CD8-positive, alpha-beta T cell (primary cell): ENCODE measurements at regions of chr18 and their contacts with region 1.

Region 1: DNA sequence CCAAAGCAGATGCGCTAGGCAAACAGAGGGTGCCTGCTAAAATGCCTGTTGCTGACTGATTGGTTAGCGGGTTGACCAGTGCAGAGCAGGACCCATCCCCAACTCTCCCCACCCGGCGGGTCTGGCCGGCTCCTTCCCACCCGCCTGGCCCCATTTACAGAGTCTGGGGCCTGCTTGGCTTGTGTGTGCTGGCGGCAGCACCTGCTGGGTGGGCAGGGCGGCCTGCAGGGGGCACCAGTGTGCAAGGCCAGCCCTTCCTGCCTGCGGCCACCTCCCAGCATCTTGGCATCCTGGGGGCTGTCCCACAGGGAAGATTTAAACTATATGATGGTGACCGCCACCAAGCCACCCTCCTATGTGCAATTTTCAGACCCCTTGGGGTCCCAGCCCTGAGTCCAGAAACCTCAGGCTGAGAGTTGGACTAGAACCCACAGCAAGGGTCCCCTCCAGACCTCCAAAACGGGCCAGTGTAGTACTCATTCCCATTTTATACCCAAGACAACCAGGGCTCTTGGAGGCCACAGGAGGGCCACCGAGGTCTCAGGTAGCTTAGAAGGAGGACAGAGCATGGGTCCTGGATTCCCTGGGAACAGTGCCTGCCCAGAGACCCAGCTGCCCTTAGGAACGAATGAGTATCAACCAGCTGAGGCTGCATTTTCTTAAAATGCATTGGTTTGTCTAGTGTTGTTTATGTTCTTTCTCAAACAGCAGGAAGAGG is 173.6 kb downstream of the SMAD7 start:
- DNase-seq: peak; percentile 40 to 85 (median 65)
- ATAC-seq: peak; percentile 89
- H3K4me3 ChIP-seq: no peak overlapping the region
- H3K4me3 Mint-ChIP-seq: no peak overlapping the region
- H3K27ac ChIP-seq: no peak overlapping the region
- H3K27ac Mint-ChIP-seq: no peak overlapping the region
- H3K4me1 ChIP-seq: peaks cover 6% of the 10 kb centered on the region
- H3K4me1 Mint-ChIP-seq: peaks cover 2% of the 10 kb centered on the region
- H3K27me3 ChIP-seq: no peaks in the 10 kb centered on the region
- H3K27me3 Mint-ChIP-seq: peaks cover 7% of the 10 kb centered on the region
- CTCF ChIP-seq: peak; percentile 84

Region 2: GRCh38 chr18:48796491-48797205 is 19.5 kb after region 1 on chr18:
- CTCF ChIA-PET with region 1: interaction called, 15 read pairs
- POLR2A ChIA-PET with region 1: no interaction called
- intact Hi-C with region 1: no loop called
- DNase-seq: no peak
- ATAC-seq: no peak
- H3K4me3 ChIP-seq: no peak overlapping the region
- H3K4me3 Mint-ChIP-seq: no peak overlapping the region
- H3K27ac ChIP-seq: no peak overlapping the region
- H3K27ac Mint-ChIP-seq: no peak overlapping the region
- H3K4me1 ChIP-seq: no peaks in the 10 kb centered on the region
- H3K4me1 Mint-ChIP-seq: peaks cover 5% of the 10 kb centered on the region
- H3K27me3 ChIP-seq: no peaks in the 10 kb centered on the region
- H3K27me3 Mint-ChIP-seq: no peaks in the 10 kb centered on the region
- CTCF ChIP-seq: no peak

Region 3: DNA sequence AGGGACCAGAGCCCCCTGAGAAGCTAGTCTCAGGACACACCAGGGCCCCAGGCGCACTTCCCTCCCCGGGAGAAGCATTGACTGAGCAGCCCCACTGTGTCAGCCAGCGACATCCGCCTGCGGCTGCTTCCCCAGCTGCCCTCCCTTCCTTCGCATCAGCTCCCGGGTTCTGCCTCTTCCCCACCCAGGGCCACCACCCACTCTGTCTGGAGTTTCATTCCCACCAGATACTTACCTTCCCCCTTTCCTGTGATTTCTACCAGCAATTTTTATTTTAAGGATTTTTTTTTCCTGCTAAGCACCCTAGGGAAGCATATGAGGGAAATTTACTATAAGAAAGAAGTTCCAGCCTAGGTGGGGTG is 74.4 kb after region 1 on chr18:
- CTCF ChIA-PET with region 1: interaction called, 4 read pairs
- POLR2A ChIA-PET with region 1: no interaction called
- intact Hi-C with region 1: loop called in 1 of 2 experiments (anchors 5 kb)
- DNase-seq: peak in 3 of 9 experiments; percentile 18 to 41 (median 39)
- ATAC-seq: peak; percentile 57
- H3K4me3 ChIP-seq: no peak overlapping the region
- H3K4me3 Mint-ChIP-seq: no peak overlapping the region
- H3K27ac ChIP-seq: no peak overlapping the region
- H3K27ac Mint-ChIP-seq: no peak overlapping the region
- H3K4me1 ChIP-seq: peaks cover 12% of the 10 kb centered on the region
- H3K4me1 Mint-ChIP-seq: peaks cover 34% of the 10 kb centered on the region
- H3K27me3 ChIP-seq: no peaks in the 10 kb centered on the region
- H3K27me3 Mint-ChIP-seq: no peaks in the 10 kb centered on the region
- CTCF ChIP-seq: no peak

Region 4: DNA sequence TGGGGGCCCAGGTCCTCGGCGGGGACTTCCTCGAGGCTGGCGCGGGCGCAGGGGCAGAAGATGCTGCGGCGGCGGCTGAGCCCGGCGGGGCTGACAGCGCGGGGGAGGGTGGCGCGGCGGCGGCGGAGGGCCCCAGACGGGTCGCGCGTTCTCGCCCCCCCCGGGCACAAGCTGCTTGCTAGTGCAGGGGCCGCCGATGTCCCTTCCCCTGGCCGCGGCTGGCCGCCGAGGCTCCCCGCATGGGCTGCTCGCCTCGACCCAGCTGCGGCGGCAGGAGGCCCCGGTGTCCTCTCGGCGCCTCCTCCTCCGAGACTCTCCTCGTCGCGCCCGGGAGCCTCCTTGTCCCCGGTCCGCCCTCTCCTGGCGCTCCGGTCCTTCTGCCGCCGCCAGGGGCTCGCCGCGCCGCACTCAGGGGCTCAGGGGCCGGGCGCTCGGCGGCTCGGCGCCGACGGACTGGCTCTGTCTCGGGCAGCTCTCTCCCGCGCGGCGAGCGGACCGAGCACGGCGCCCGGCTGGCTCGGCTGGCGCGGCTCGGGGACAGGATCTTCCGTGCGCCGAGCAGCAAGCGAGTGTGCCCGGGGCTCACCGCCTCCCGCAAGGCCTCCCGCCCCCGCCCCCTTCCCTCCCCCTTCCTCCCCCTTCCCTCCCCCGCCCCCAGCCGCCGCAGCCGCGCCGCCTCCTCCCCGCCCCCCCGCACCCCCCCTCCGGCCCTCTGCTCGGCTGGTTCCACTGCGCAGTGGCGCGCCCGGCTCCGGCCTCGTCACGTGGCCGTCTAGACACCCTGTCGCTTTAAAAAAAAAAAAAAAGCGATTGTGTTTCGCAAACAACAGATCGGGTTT is 174.5 kb after region 1 on chr18:
- CTCF ChIA-PET with region 1: interaction called, 14 read pairs
- POLR2A ChIA-PET with region 1: no interaction called
- intact Hi-C with region 1: loop called in 1 of 2 experiments (anchors 1 kb)
- DNase-seq: peak; percentile 61 to 93 (median 80)
- ATAC-seq: peak; percentile 35
- H3K4me3 ChIP-seq: peak overlapping the region; percentile 77 to 85
- H3K4me3 Mint-ChIP-seq: peak overlapping the region; percentile 94
- H3K27ac ChIP-seq: peak overlapping the region; percentile 82 to 97
- H3K27ac Mint-ChIP-seq: peak overlapping the region; percentile 97
- H3K4me1 ChIP-seq: peaks cover 24% of the 10 kb centered on the region
- H3K4me1 Mint-ChIP-seq: peaks cover 51% of the 10 kb centered on the region
- H3K27me3 ChIP-seq: no peaks in the 10 kb centered on the region
- H3K27me3 Mint-ChIP-seq: peaks cover 3% of the 10 kb centered on the region
- CTCF ChIP-seq: no peak

Region 5: DNA sequence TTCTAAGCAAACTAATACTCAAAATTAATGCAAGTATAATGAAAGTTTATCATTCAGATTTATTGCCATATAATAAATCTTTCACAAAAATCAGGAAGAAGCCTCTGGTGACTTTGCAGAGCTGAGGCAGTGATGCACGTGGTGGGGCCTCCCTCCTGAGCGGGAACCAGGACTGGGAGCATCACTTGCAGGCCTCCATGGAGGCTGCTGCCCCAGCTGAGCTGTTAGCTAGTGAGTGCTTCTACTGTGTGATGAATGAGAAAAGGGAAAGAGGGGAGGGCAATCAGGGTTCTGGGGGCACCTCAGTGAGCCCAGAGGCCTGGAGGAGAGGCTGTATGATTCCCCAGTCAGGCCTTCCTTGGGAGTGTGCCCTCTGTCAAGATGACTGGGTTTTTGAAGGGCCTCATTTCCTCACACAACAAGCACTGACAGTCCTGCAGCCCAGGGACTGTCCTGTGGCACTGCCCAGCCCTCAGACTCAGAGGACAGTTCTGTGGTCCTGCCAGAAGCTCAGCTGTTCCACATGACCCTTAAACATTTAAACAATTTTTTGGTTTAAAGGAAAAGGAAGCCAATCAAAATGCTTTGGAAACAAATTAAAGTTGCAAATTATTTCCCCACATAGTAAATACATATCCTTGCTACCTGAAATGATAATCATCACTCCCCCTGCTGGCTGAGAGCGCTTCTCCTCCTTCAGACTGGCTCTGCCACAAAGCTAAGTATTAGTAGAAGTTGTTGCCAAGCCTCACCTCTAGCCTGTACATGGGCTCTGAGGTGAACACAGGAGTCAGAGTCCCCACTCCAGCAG is 264.5 kb after region 1 on chr18:
- CTCF ChIA-PET with region 1: interaction called, 34 read pairs
- POLR2A ChIA-PET with region 1: no interaction called
- intact Hi-C with region 1: loop called (anchors 1 to 5 kb)
- DNase-seq: peak in 7 of 9 experiments; percentile 21 to 63 (median 56)
- ATAC-seq: peak; percentile 56
- H3K4me3 ChIP-seq: no peak overlapping the region
- H3K4me3 Mint-ChIP-seq: no peak overlapping the region
- H3K27ac ChIP-seq: no peak overlapping the region
- H3K27ac Mint-ChIP-seq: no peak overlapping the region
- H3K4me1 ChIP-seq: no peaks in the 10 kb centered on the region
- H3K4me1 Mint-ChIP-seq: peaks cover 4% of the 10 kb centered on the region
- H3K27me3 ChIP-seq: no peaks in the 10 kb centered on the region
- H3K27me3 Mint-ChIP-seq: no peaks in the 10 kb centered on the region
- CTCF ChIP-seq: peak; percentile 28

Region 6: DNA sequence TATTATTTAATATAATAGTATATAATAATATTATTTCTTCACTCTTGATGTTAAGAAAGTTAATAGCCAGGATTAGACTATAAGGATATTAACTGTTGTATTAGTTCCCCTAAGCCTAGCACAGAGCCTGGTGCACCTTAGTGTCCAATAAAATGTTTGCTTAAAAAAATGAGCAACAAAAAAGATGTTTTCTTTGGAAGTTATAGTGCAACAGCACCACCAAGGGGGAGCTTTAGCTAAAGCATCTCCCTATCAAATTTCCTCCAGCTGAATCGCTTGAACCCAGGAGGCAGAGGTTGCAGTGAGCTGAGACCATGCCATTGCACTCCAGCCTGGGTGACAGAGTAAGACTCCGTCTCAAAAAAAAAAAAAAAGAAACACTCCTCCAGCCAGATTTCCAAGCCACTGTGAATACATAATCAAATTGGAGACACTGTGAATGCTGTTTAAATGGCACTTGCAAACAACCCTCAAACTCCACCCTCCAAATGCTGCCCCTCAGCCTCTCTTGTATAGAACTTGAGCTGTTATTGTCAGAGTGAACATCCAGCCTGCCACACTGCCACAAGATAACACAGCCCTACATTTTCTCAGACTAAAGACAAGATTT is 461.4 kb after region 1 on chr18:
- CTCF ChIA-PET with region 1: interaction called, 4 read pairs
- POLR2A ChIA-PET with region 1: no interaction called
- intact Hi-C with region 1: loop called in 1 of 2 experiments (anchors 5 kb)
- DNase-seq: peak in 2 of 9 experiments; percentile 26 to 37
- ATAC-seq: no peak
- H3K4me3 ChIP-seq: no peak overlapping the region
- H3K4me3 Mint-ChIP-seq: no peak overlapping the region
- H3K27ac ChIP-seq: no peak overlapping the region
- H3K27ac Mint-ChIP-seq: no peak overlapping the region
- H3K4me1 ChIP-seq: no peaks in the 10 kb centered on the region
- H3K4me1 Mint-ChIP-seq: no peaks in the 10 kb centered on the region
- H3K27me3 ChIP-seq: no peaks in the 10 kb centered on the region
- H3K27me3 Mint-ChIP-seq: no peaks in the 10 kb centered on the region
- CTCF ChIP-seq: peak; percentile 13

Region 7: DNA sequence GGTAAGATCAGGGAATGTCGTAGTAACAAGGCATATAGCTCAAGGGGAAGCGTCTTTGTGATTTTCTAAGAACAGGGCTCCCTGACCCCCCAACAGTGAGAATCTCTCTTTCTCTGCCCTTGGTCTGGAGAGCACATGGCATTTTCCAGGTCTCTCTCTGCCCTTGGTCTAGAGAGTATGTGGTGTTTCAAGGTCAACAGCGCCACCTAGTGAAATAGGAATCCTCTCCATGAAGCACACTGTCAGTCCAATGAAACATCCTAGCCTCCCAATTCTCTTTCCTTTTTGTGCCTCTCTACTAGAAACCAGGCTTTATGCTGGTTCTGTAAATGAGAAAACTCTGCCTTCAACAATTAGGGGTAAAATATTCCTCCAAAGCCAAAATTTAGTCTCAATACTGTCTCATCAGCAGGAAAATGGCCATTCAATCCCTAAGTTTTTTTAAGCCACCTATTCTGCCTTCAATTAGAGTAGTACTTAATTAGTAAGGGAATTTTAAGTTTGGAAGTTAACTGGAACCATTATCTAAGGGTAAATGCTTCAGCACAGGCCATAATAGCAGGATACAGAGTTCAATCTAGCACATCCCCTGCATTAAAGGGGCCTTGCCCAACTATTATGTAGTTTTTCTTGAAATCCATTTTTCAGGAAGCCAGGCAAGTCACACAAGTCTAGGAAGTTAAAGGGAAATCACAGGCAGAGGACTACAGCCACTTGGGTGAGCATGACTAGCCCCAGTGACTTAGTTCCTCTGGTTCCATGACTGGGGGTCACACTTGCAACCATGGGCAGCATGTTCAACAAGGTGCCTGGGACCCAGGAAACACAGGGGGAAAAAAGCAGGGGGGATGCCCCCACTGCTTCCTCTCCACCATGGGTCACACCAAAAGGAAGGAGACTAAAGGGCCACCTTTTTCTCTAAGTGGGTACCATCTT is 670.9 kb after region 1 on chr18:
- CTCF ChIA-PET with region 1: interaction called, 3 read pairs
- POLR2A ChIA-PET with region 1: no interaction called
- intact Hi-C with region 1: loop called (anchors 1 kb)
- DNase-seq: peak in 6 of 9 experiments; percentile 7 to 75 (median 32)
- ATAC-seq: peak; percentile 52
- H3K4me3 ChIP-seq: no peak overlapping the region
- H3K4me3 Mint-ChIP-seq: no peak overlapping the region
- H3K27ac ChIP-seq: no peak overlapping the region
- H3K27ac Mint-ChIP-seq: no peak overlapping the region
- H3K4me1 ChIP-seq: no peaks in the 10 kb centered on the region
- H3K4me1 Mint-ChIP-seq: peaks cover 31% of the 10 kb centered on the region
- H3K27me3 ChIP-seq: no peaks in the 10 kb centered on the region
- H3K27me3 Mint-ChIP-seq: no peaks in the 10 kb centered on the region
- CTCF ChIP-seq: peak; percentile 71